ENCODE measurements at regions of chr11 and their contacts with region 1.

Region 1: DNA sequence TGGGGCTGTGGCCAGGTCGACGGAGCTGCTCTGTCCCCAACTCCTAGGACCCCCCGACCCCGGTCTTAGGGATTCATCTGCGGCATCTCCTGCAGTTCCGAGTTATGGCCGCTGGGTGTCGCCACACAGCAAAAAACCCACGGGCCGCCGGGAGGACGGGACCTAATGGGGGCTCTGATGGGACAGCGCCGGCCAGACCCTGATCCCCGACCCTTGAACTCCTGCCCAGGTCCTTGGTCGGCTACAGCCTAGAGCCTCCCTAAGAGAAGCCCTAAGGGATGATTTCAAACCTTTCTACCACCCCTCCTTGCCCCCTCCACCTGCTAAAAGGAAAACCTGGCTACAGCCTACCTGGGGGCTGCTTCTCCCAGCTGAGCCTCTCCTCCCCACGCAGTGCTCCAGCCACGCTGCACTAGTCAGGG is 30.8 kb upstream of the LRRC10B start:
- DNase-seq: peak in 39 of 42 donors; percentile 32 to 83 (median 65)

Region 2: DNA sequence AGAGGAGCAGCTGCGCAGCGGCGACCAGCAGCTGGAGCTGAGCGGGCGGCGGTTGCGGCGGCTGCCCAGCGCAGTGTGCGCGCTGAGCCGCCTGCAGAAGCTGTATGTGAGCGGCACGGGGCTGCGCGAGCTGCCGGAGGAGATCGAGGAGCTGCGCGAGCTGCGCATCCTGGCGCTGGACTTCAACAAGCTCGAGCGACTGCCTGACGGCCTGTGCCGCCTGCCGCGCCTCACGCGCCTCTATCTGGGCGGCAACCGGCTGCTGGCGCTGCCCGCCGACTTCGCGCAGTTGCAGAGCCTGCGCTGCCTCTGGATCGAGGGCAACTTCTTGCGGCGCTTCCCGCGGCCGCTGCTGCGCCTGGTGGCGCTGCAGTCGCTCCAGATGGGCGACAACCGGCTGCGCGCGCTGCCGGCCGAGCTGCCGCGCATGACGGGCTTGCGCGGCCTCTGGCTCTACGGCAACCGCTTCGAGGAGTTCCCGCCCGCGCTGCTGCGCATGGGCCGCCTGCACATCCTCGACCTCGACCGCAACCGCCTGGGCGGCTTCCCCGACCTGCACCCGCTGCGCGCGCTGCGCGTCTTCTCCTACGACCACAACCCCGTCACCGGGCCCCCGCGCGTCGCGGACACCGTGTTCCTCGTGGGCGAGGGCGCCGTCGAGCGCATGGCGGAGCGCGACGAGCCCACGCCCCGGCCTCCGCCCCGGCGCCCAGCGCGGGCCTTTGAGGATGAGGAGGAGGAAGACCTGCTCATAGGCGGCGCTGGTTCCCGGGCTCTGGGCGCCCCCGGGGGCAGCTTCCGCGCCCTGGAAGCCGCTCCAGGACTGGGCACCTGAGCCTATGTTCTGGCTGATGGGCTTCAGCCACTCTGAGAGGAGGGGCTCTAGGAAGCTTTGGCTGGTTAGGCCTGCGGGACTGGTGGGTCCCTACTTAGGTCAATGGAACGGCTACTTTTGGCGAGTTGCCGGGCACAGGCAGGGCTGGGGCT is 31.6 kb after region 1 on chr11:
- intact Hi-C with region 1: loop called (anchors 5 kb)
- DNase-seq: peak in 37 of 42 donors; percentile 27 to 77 (median 58)